ENCODE measurements at regions of chr2 and their contacts with region 1.

Region 1: DNA sequence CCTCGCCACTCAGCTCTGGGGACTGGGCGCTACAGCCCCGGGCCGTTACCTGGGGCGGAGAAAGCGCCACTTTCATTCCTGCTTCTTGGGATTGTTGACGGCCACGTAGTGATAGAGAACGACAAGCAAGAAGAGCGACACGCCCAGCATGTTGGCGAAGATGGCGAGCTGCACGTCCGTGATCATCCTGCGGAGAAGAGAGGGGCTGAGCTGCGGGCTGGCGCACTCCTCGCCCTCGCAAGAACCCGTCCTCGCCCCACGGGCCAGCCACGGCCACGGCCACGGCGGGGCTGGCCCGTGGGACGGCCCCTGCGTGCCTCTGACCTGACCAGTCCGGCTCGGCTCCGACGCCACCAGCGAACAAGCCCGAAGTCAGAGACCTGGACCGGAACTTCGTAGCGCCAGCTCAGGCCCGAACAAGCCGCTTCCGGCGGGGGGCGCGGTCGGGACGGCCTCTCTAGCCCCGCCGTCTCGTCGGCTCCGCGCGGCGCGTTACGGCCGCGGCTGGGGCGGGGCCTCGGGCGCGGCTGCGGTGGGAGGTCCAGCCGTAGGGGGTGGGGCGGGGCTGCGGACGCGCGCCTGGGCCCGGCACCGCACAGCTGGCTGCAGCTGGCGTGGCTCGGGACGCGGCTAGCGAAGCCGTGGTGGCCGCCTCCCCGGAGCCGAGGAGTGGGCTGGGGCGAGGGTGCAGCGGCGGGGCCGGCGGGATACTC is at the start of gene OST4:
- DNase-seq: peak; percentile 94
- ATAC-seq: peak; percentile 97
- H3K4me3 ChIP-seq: peak within 1 kb of the TSS; percentile 86
- H3K27ac ChIP-seq: peak within 1 kb of the TSS; percentile 30; the same call in 1 of the 2 replicates
- H3K4me1 ChIP-seq: peaks cover 12% of the 10 kb centered on the region
- H3K27me3 ChIP-seq: no peaks in the 10 kb centered on the region
- CTCF ChIP-seq: no peak
- total RNA-seq, gene OST4: 244 and 258 TPM in 2 replicates

Region 2: DNA sequence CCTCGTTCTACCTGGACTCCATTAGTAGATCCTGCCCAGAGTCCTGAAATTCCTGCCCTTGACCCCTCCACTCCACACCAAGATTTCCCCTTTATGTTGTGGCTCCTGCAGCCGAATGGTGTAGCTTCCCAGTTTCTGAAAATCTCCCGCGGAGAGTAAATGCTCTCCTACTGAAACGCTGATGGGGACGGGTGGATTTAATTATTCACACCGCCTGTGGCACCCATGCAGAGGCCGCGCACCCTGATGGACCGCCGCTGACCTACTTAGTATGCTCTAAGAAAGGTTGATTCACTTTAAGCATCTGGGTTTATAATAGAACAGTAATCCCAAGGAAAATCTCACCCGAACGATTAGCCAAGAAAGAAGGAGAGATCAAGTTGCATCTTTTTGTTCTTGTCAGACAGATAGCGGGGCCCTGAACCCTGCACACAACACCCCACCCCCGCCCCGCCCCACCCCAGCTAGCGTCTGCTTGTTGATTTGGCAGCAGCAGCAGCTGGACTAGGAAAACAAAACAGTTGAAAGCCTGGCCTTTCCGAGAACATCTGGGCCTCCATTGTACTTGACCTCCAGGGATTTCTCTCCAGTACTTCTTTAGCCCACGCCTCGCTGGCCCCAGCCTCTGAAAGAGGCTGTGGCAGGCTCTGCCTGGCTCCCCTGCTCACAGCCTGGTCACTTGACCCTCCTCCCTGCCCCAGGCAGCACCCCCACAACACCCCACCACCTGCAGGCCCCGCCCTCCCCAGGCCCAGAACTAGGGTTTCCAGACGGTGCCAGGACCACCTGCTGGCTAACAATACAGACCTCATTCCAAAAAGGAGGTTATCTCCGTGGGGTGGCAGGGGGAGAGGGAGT is 169.9 kb before region 1 on chr2:
- CTCF ChIA-PET with region 1: no interaction called
- POLR2A ChIA-PET with region 1: no interaction called
- intact Hi-C with region 1: no loop called
- DNase-seq: no peak
- ATAC-seq: no peak
- H3K4me3 ChIP-seq: no peak overlapping the region
- H3K27ac ChIP-seq: no peak overlapping the region
- H3K4me1 ChIP-seq: no peaks in the 10 kb centered on the region
- H3K27me3 ChIP-seq: peaks cover 69% of the 10 kb centered on the region
- CTCF ChIP-seq: no peak

Region 3: DNA sequence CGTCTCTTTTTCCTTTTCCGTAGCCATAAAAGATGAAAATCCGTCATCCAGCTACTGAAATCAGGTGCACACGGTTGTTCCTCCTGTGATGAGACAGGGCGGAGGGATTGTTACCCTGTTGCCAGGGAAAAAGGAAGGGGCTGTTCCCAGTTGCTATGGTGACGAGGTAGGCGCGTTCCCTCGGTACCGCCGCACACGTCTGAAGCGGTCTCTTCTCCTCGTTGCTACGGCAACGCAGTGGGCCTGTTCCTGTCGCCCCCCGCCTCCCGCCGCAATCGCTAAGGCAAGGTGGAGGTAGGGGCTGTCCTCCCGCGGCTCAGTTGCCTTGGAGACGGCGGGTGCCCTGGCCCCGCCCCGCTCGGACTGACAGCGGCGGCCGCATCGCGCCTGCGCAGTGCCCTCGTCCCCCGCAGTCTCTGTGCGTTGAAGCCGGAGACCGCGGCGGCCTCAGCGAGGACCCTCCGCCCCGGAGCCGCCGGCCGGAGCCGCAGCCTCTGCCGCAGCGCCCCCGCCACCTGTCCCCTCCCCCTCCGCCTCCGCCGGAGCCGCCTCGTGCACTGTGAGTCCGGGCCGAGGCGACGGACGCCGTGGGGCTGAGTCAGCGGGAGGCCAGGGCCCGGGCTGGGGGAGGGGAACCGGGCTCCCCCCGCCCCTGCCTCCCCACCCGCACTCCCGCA is 101.1 kb before region 1 on chr2 and contains the start of gene MAPRE3:
- CTCF ChIA-PET with region 1: no interaction called
- POLR2A ChIA-PET with region 1: interaction called, 11 read pairs
- intact Hi-C with region 1: no loop called
- DNase-seq: peak; percentile 76
- ATAC-seq: peak; percentile 77
- H3K4me3 ChIP-seq: peak within 1 kb of the TSS; percentile 93
- H3K27ac ChIP-seq: peak within 1 kb of the TSS; percentile 98
- H3K4me1 ChIP-seq: peaks cover 49% of the 10 kb centered on the region
- H3K27me3 ChIP-seq: no peaks in the 10 kb centered on the region
- CTCF ChIP-seq: no peak
- total RNA-seq, gene MAPRE3: 11.9 and 15.6 TPM in 2 replicates

Region 4: DNA sequence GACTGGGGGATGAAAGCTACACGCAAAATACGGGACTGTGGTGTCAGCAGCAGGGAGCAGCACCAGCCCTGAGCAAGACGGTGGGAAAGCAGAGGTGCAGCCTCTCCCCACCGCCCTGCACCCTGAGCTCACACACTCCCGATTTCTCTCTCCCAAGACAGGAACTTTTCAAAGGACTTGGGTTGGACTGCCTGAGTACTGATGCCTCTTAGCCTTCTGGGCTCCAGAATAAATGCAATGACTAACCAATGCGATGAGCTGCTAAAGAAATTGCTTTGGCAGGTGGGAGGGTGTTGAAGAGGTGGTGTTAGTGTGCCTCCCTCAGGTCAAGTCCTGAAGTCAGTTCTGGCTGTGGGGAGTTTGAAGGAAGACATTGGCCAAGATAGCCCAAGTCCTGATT is 220.4 kb after region 1 on chr2:
- CTCF ChIA-PET with region 1: interaction called, 14 read pairs
- POLR2A ChIA-PET with region 1: no interaction called
- intact Hi-C with region 1: no loop called
- DNase-seq: peak; percentile 48
- ATAC-seq: peak; percentile 11; the same call in 1 of the 2 replicates
- H3K4me3 ChIP-seq: no peak overlapping the region
- H3K27ac ChIP-seq: no peak overlapping the region
- H3K4me1 ChIP-seq: peaks cover 28% of the 10 kb centered on the region
- H3K27me3 ChIP-seq: no peaks in the 10 kb centered on the region
- CTCF ChIP-seq: peak; percentile 51

Region 5: DNA sequence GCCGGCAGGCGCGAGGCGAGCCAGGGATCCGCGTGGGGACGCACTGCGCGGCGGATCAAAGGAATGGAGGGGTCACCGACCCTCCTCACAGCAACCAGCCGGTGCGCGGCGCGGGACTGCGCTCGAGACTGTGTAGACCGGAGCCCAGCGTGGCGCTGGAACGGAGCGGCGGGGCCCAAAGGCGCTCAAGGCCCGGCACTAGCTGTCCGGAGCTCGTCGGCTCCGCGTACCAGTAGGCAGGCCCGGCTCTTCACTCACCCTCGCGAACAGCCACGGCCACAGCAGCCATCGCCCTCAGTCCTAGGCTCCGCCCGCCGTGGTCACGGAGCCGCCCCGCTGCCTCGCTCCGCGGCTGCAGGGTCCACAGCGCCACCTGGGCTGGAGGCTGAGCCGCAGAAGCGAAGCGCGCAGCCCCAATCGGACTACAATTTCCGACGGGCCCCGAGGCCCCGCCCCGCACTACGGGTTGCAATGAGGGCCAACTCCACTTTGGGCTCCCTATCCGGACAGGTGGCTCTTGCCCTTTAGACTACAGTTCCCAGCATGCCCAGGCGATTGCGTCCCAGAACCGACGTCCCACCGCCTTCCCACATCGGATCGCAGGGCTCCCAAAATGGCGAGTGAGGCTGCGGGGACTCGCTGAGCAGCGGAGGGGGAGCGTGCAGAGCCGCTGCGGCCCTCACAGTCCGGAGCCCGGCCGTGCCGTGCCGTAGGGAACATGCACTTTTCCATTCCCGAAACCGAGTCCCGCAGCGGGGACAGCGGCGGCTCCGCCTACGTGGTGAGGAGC is 298.8 kb after region 1 on chr2 and contains the starts of genes EIF2B4 and SNX17:
- CTCF ChIA-PET with region 1: no interaction called
- POLR2A ChIA-PET with region 1: no interaction called
- intact Hi-C with region 1: loop called (anchors 1 kb)
- DNase-seq: peak; percentile 99
- ATAC-seq: peak; percentile 92
- H3K4me3 ChIP-seq: peak within 1 kb of the TSS; percentile 76
- H3K27ac ChIP-seq: peak within 1 kb of the TSS; percentile 51
- H3K4me1 ChIP-seq: peaks cover 35% of the 10 kb centered on the region
- H3K27me3 ChIP-seq: no peaks in the 10 kb centered on the region
- CTCF ChIP-seq: peak; percentile 81
- total RNA-seq, gene EIF2B4: 35.8 and 43.9 TPM in 2 replicates
- total RNA-seq, gene SNX17: 99.6 and 110 TPM in 2 replicates

Measured in PC-3 (cell line).